Natural killer cell (primary cell): ENCODE measurements at regions of chr6 and their contacts with region 1.

Region 1: DNA sequence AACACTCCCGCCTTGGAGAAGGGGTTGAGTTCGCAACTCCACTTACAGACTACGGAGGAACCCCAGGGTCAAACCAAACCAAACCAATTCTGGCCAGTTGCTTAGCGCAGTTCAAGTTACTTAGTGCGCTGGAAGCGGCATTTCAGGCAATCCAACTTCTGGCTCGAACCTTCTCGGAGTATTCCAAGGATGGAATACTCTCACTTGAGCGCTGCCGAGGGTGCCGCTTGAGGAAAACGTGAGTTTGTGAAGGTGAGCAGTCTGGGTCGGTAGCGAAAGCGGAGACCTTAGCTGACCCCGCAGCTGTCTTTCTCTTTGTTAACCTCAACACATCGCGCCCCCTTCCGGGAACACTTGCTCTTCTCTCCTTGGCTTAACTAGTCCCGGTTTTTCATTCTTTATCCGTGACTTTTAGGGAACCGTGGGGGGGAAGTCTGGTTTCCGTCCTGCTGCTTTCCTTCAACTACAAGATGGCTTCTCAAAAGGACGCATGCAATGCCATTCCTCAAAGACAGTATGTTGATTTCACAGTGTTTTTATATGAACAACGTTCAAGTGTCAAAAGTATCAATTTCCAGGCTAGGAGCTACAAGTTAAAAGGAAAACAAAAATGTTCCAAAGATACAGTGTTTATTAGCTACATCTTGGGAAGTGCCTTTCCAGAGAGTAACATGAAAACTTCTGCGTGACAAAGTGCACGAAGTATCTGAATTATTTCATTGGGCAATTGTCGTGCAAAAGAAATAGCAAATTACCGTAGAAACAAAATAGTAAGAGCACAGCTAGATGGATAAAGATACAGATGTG is 742 bp upstream of the PNISR start:
- DNase-seq: peak; percentile 56 to 78
- ATAC-seq: peak; percentile 40 to 58 (median 46)
- H3K4me3 ChIP-seq: peak overlapping the region; percentile 89
- H3K4me3 Mint-ChIP-seq: peak overlapping the region; percentile 100
- H3K27ac ChIP-seq: peak overlapping the region; percentile 99
- H3K27ac Mint-ChIP-seq: peak overlapping the region; percentile 96 to 99
- H3K4me1 ChIP-seq: peaks cover 17% of the 10 kb centered on the region
- H3K4me1 Mint-ChIP-seq: peaks cover 54 to 58% of the 10 kb centered on the region in 2 donors
- H3K27me3 ChIP-seq: no peaks in the 10 kb centered on the region
- H3K27me3 Mint-ChIP-seq: no peaks in the 10 kb centered on the region
- CTCF ChIP-seq: peak; percentile 22

Region 2: GRCh38 chr6:99568103-99568933 is 142.5 kb after region 1 on chr6 and contains the start of gene CCNC:
- intact Hi-C with region 1: loop called (anchors 2 kb)
- DNase-seq: peak; percentile 84 to 91
- ATAC-seq: peak; percentile 96 to 99 (median 98)
- H3K4me3 ChIP-seq: peak within 1 kb of the TSS; percentile 72
- H3K4me3 Mint-ChIP-seq: peak within 1 kb of the TSS; percentile 100
- H3K27ac ChIP-seq: peak within 1 kb of the TSS; percentile 64
- H3K27ac Mint-ChIP-seq: peak within 1 kb of the TSS; percentile 97
- H3K4me1 ChIP-seq: no peaks in the 10 kb centered on the region
- H3K4me1 Mint-ChIP-seq: peaks cover 37 to 41% of the 10 kb centered on the region in 2 donors
- H3K27me3 ChIP-seq: no peaks in the 10 kb centered on the region
- H3K27me3 Mint-ChIP-seq: no peaks in the 10 kb centered on the region
- CTCF ChIP-seq: no peak
- total RNA-seq, gene CCNC: 46.9 to 58.3 (median 52.5) TPM